ENCODE measurements at regions of chr6 and their contacts with region 1.

Region 1: GRCh38 chr6:85482905-85483700 is 33.2 kb downstream of the NT5E start:
- DNase-seq: peak; percentile 71
- ATAC-seq: peak; percentile 88
- H3K4me3 ChIP-seq: no peak overlapping the region
- H3K4me3 Mint-ChIP-seq: no peak overlapping the region
- H3K27ac ChIP-seq: no peak overlapping the region
- H3K27ac Mint-ChIP-seq: no peak overlapping the region
- H3K4me1 ChIP-seq: peaks cover 3 to 4% of the 10 kb centered on the region in 2 donors
- H3K4me1 Mint-ChIP-seq: peaks cover 15% of the 10 kb centered on the region
- H3K27me3 ChIP-seq: no peaks in the 10 kb centered on the region
- H3K27me3 Mint-ChIP-seq: no peaks in the 10 kb centered on the region
- CTCF ChIP-seq: peak; percentile 99

Region 2: GRCh38 chr6:85360794-85361642 is 122.1 kb before region 1 on chr6:
- CTCF ChIA-PET with region 1: interaction called, 224 read pairs
- POLR2A ChIA-PET with region 1: no interaction called
- intact Hi-C with region 1: no loop called
- DNase-seq: no peak
- ATAC-seq: no peak
- H3K4me3 ChIP-seq: no peak overlapping the region
- H3K4me3 Mint-ChIP-seq: no peak overlapping the region
- H3K27ac ChIP-seq: no peak overlapping the region
- H3K27ac Mint-ChIP-seq: no peak overlapping the region
- H3K4me1 ChIP-seq: no peaks in the 10 kb centered on the region
- H3K4me1 Mint-ChIP-seq: no peaks in the 10 kb centered on the region
- H3K27me3 ChIP-seq: no peaks in the 10 kb centered on the region
- H3K27me3 Mint-ChIP-seq: peaks cover 4% of the 10 kb centered on the region
- CTCF ChIP-seq: no peak

Region 3: GRCh38 chr6:85419046-85419759 is 63.9 kb before region 1 on chr6:
- CTCF ChIA-PET with region 1: interaction called, 7 read pairs
- POLR2A ChIA-PET with region 1: no interaction called
- intact Hi-C with region 1: loop called (anchors 5 kb)
- DNase-seq: peak; percentile 23
- ATAC-seq: peak; percentile 75
- H3K4me3 ChIP-seq: no peak overlapping the region
- H3K4me3 Mint-ChIP-seq: peak overlapping the region; percentile 76
- H3K27ac ChIP-seq: peak overlapping the region; percentile 30 to 60
- H3K27ac Mint-ChIP-seq: peak overlapping the region; percentile 96
- H3K4me1 ChIP-seq: peaks cover 22 to 23% of the 10 kb centered on the region in 2 donors
- H3K4me1 Mint-ChIP-seq: peaks cover 40% of the 10 kb centered on the region
- H3K27me3 ChIP-seq: no peaks in the 10 kb centered on the region
- H3K27me3 Mint-ChIP-seq: peaks cover 9% of the 10 kb centered on the region
- CTCF ChIP-seq: no peak

Region 4: GRCh38 chr6:85460921-85461797 is 21.9 kb before region 1 on chr6:
- CTCF ChIA-PET with region 1: interaction called, 17 read pairs
- POLR2A ChIA-PET with region 1: no interaction called
- intact Hi-C with region 1: no loop called
- DNase-seq: no peak
- ATAC-seq: peak; percentile 61
- H3K4me3 ChIP-seq: no peak overlapping the region
- H3K4me3 Mint-ChIP-seq: peak overlapping the region; percentile 51
- H3K27ac ChIP-seq: peak overlapping the region; percentile 72 to 74
- H3K27ac Mint-ChIP-seq: peak overlapping the region; percentile 93
- H3K4me1 ChIP-seq: peaks cover 48 to 75% of the 10 kb centered on the region in 2 donors
- H3K4me1 Mint-ChIP-seq: peaks cover 91% of the 10 kb centered on the region
- H3K27me3 ChIP-seq: peaks cover 0 to 3% (median 0%) of the 10 kb centered on the region in 4 experiments
- H3K27me3 Mint-ChIP-seq: peaks cover 2% of the 10 kb centered on the region
- CTCF ChIP-seq: no peak

Region 5: GRCh38 chr6:85678602-85679444 is 195.7 kb after region 1 on chr6:
- CTCF ChIA-PET with region 1: interaction called, 10 read pairs
- POLR2A ChIA-PET with region 1: no interaction called
- intact Hi-C with region 1: no loop called
- DNase-seq: peak; percentile 100
- ATAC-seq: peak; percentile 90
- H3K4me3 ChIP-seq: peak overlapping the region; percentile 74 to 98 (median 91)
- H3K4me3 Mint-ChIP-seq: peak overlapping the region; percentile 92
- H3K27ac ChIP-seq: peak overlapping the region; percentile 86 to 89
- H3K27ac Mint-ChIP-seq: peak overlapping the region; percentile 95
- H3K4me1 ChIP-seq: peaks cover 25 to 36% of the 10 kb centered on the region in 2 donors
- H3K4me1 Mint-ChIP-seq: peaks cover 46% of the 10 kb centered on the region
- H3K27me3 ChIP-seq: no peaks in the 10 kb centered on the region
- H3K27me3 Mint-ChIP-seq: no peaks in the 10 kb centered on the region
- CTCF ChIP-seq: no peak